HEK293T (cell line): ENCODE measurements at regions of chr4 and their contacts with region 1.

Region 1: DNA sequence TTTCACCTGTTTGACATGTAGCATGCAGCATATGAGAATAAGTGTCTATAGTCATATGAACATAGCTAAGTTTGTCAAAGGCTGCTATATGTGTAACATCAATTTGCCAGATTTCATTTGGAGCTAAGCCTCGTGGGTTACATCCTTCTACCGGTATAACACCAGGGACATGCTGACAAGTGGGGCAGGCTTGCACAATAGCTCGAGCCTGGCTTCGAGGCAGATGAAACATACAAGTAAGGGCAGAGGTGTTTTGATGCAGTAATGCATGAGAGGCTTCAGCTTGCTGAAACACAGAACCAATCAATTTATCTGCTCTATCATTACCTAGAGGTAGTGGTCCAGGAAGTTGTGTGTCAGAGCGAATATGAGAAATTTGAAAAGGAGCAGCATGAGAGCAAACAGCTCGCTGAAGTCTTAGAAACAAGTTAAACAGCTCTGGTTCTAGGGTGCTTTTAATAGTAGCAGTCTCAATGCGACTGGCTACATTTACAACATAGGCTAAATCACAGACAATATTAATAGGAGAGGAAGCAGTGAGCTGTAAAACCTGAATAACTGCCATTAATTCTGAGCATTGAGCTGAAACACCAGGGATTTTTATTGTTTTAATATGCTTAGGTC is 14.9 kb upstream of the UGDH start:
- DNase-seq: no peak

Region 2: GRCh38 chr4:39527273-39528060 is 14.6 kb before region 1 on chr4 and contains the start of gene UGDH:
- CTCF ChIA-PET with region 1: no interaction called
- POLR2A ChIA-PET with region 1: interaction called, 14 read pairs
- DNase-seq: peak; percentile 87

Region 3: GRCh38 chr4:39609454-39609931 is 67.4 kb after region 1 on chr4:
- CTCF ChIA-PET with region 1: no interaction called
- POLR2A ChIA-PET with region 1: no interaction called
- DNase-seq: no peak